Calu3 (cell line): ENCODE measurements at regions of chr18 and their contacts with region 1.

Region 1: GRCh38 chr18:21298351-21298750 is 56.3 kb downstream of the GREB1L start:
- DNase-seq: no peak
- H3K4me3 Mint-ChIP-seq: no peak overlapping the region
- H3K27ac Mint-ChIP-seq: no peak overlapping the region
- H3K4me1 Mint-ChIP-seq: no peaks in the 10 kb centered on the region
- H3K27me3 Mint-ChIP-seq: no peaks in the 10 kb centered on the region
- CTCF ChIP-seq: no peak

Region 2: DNA sequence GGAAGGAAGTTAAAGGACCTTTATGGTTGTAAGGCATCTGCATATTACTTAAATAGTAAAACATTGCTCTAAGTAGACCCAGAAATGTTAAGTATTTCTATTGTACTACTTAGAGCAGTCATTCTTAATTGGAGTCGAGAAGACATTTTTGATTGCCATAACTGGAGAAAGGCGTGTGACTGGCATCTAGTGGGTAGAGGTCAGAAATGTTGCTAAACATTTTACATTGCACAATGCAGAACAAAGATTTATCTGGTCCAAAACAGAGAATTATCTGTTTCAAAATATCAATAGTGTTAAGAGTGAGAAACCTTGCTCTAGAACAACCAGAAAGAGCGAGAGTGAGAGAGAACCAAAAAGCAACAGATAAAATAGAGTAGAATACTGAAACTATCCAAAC is 163.5 kb before region 1 on chr18:
- CTCF ChIA-PET with region 1: no interaction called
- intact Hi-C with region 1: loop called (anchors 10 kb)
- DNase-seq: peak; percentile 18
- H3K4me3 Mint-ChIP-seq: no peak overlapping the region
- H3K27ac Mint-ChIP-seq: no peak overlapping the region
- H3K4me1 Mint-ChIP-seq: no peaks in the 10 kb centered on the region
- H3K27me3 Mint-ChIP-seq: no peaks in the 10 kb centered on the region
- CTCF ChIP-seq: no peak

Region 3: DNA sequence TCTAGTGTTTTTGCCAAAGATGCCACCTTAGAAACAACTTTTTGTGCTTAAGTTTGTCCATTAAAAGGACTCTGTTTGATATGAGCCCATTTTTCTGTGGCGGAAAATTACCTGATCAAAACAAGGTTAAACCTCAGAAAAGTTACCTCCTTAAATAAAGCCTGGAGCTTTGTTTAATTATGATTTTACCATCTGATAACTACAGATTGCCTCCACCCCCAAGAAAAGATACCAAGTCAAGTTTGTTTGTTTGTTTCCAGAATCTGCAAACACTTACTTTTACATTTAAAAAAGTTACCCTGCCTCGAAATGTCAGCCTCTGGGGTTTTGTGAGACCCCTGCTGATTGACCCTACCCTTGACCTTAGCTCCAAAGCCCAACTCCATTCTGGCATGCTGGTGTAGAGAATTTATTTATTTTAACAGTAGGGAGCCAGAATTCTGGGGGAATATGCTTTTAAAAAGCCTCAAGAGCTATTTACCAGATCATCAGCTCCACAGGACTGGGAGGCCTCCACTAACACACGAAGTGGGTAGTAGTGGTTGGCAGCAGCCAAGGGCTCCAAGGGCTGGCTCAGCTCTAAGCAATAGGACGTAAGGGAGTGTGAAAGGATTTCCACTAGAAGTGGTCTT is 79.6 kb before region 1 on chr18:
- CTCF ChIA-PET with region 1: no interaction called
- intact Hi-C with region 1: loop called (anchors 10 kb)
- DNase-seq: no peak
- H3K4me3 Mint-ChIP-seq: no peak overlapping the region
- H3K27ac Mint-ChIP-seq: no peak overlapping the region
- H3K4me1 Mint-ChIP-seq: no peaks in the 10 kb centered on the region
- H3K27me3 Mint-ChIP-seq: no peaks in the 10 kb centered on the region
- CTCF ChIP-seq: no peak